ENCODE measurements at regions of chr6 and their contacts with region 1.

Region 1: DNA sequence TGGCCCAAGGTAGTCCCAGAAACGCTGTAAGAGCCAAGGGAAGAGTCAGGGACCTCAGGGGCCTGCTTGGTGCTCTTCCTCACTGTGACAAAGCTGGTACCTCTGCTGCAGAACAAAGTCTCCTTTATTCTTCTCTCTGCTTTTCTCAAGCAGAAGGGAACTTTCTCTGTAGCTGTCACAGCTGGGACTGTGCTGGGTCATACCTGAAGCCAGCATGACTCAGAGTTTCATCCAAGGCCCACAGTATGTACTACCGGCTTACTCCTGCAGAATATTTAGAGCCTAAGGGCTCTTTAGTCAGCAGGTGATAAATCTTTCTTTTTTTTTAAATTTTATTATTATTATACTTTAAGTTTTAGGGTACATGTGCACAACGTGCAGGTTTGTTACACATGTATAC is 183.2 kb downstream of the TINAG start:
- DNase-seq: no peak
- H3K4me3 ChIP-seq: no peak overlapping the region
- H3K27ac ChIP-seq: no peak overlapping the region
- H3K4me1 ChIP-seq: no peaks in the 10 kb centered on the region
- H3K27me3 ChIP-seq: no peaks in the 10 kb centered on the region
- CTCF ChIP-seq: no peak
- EP300 ChIP-seq: no peak
- POLR2A ChIP-seq: no peak

Region 2: GRCh38 chr6:54515013-54515412 is 23.6 kb after region 1 on chr6:
- intact Hi-C with region 1: loop called in 1 of 4 experiments (anchors 1 kb)
- DNase-seq: no peak
- H3K4me3 ChIP-seq: no peak overlapping the region
- H3K27ac ChIP-seq: no peak overlapping the region
- H3K4me1 ChIP-seq: no peaks in the 10 kb centered on the region
- H3K27me3 ChIP-seq: no peaks in the 10 kb centered on the region
- CTCF ChIP-seq: no peak
- EP300 ChIP-seq: no peak
- POLR2A ChIP-seq: no peak

Region 3: DNA sequence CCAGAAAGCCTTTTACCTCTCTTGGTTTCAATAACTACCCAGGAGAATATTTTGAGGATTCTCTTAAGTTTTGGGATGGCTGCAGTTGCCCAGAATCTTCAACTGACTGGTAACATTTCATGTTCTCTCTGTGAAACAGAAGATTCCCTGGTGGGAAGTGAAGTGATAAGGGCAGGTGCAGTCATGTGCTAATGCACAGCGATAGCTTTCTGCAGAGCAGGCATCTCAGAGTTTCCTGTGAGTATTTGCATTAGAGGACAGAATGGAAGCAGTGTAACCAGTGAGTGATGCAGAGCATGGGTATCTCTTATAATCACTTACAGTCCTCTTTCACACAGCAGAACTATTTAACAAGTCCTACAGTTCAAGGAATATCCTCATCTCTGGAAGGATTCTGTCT is 759.0 kb after region 1 on chr6:
- intact Hi-C with region 1: no loop called
- DNase-seq: no peak
- H3K4me3 ChIP-seq: no peak overlapping the region
- H3K27ac ChIP-seq: no peak overlapping the region
- H3K4me1 ChIP-seq: no peaks in the 10 kb centered on the region
- H3K27me3 ChIP-seq: peaks cover 2% of the 10 kb centered on the region
- CTCF ChIP-seq: no peak
- EP300 ChIP-seq: no peak
- POLR2A ChIP-seq: no peak